ENCODE measurements at regions of chr15 and their contacts with region 1.

Region 1: GRCh38 chr15:64895285-64896065 is 16.2 kb upstream of the ANKDD1A start:
- DNase-seq: no peak

Region 2: DNA sequence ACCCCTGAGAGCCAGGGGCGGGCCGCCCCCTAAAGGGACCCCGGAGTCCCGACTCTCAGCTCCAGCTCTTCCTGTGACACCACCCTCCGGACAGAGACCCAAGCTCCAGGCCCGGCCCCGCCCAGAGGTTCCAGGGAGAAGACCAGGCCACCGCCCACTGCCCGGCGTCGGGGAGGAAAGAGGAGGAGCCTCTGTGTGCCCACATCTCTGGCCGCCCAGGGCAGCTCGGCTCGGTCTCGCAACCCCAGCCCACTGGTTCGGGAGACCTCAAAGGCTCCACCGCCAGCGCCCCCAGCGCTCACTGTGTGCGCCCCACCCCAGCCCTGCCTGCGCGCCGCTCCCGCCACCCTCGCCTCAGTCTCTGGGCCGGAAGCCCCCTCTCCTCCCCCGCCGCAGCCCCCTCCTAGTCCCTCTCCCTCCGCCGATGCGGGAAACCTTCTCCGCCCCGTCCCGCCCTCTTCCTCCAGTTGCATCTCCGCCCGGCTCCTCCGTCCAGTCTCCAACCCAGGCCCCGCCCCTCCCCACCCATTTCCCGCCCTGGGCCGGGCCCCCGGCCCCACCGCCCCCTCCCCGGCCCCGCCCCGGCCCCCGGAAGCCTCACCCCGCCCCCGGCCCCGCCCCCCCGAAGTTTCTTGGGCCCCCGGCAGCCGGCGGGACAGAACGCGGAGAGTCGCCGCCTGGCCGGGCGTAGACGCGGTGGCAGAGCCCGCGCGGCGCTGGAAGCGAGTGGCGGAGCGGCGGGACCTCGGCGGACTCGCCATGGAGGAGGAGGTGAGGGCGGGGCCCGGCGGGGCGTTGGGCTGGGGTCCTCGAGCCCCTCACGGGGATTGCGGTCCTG is 54.0 kb before region 1 on chr15 and contains the start of gene PLEKHO2:
- intact Hi-C with region 1: loop called (anchors 5 kb)
- DNase-seq: peak; percentile 99
- total RNA-seq, gene PLEKHO2: 10.4 TPM

Measured in cardiac septum (tissue), 1 donor.